HEK293T (cell line): ENCODE measurements at regions of chr13 and their contacts with region 1.

Region 1: DNA sequence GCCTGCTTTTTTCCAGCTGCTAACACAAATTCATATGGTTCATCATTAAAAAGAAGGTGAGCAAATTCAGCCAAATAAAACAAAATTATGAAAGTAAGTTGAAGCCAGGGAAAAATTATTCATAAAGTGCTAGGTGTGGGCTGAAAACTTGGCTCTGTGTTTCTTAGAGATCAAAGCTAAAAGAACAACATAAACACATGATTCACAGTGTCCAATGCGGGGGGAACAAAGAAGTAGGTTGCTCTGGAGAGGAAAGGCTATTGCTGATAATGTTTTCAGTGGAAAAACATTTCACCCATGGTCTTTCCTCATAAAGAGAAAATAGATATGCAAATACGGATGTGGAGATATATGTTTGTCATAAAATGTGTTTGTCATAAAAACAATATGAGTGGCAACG is 1691.5 kb upstream of the SLC10A2 start:
- DNase-seq: no peak

Region 2: DNA sequence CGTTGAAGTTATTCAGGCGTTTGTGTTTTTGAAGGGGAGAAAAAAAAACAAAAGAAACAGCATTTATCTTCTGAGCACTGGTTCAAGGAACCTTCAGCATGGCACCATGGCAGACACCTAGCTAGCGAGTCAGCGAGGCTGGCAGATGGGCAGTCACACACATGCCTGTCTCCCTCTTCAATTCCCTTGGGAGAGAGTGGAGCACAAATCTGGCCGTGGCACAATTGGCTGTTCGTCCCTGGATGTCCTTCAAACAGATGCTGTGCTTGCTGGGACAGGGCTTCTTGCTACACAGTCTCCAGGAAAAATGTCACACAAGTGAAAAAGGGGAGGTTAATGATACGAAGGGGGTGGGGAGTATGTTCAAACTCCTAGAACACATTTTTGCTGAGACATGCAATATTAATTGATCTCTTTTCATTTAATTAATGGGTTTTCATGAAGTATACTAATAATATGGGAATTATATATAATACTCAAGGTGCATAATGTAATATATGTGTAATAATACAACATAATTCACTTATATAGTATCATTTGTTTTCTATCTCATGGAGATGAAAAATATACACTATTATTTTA is 17.0 kb before region 1 on chr13:
- CTCF ChIA-PET with region 1: no interaction called
- POLR2A ChIA-PET with region 1: no interaction called
- DNase-seq: no peak

Region 3: DNA sequence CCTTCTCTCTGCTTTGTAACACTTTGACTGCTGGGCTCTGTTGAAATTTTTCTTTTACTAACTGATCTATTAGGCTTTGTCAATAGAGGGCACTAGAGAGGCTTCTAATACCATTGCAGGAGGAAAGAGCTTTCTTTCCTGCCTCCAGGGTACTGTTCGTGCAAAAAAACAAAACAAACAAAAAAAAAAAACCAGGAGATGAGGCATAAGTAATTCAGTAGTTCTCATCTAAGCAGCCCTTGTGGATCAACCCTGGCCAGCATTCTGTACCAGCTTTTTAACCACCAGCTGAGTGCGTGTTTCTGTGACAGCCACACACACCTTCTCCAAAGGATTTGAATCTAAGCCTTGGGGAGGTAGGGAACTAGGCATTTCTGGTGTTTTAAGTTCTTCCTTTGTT is 16.1 kb after region 1 on chr13:
- CTCF ChIA-PET with region 1: interaction called, 10 read pairs
- POLR2A ChIA-PET with region 1: no interaction called
- DNase-seq: peak; percentile 3